Naive thymus-derived CD8-positive, alpha-beta T cell (primary cell): ENCODE measurements at regions of chr6 and their contacts with region 1.

Region 1: DNA sequence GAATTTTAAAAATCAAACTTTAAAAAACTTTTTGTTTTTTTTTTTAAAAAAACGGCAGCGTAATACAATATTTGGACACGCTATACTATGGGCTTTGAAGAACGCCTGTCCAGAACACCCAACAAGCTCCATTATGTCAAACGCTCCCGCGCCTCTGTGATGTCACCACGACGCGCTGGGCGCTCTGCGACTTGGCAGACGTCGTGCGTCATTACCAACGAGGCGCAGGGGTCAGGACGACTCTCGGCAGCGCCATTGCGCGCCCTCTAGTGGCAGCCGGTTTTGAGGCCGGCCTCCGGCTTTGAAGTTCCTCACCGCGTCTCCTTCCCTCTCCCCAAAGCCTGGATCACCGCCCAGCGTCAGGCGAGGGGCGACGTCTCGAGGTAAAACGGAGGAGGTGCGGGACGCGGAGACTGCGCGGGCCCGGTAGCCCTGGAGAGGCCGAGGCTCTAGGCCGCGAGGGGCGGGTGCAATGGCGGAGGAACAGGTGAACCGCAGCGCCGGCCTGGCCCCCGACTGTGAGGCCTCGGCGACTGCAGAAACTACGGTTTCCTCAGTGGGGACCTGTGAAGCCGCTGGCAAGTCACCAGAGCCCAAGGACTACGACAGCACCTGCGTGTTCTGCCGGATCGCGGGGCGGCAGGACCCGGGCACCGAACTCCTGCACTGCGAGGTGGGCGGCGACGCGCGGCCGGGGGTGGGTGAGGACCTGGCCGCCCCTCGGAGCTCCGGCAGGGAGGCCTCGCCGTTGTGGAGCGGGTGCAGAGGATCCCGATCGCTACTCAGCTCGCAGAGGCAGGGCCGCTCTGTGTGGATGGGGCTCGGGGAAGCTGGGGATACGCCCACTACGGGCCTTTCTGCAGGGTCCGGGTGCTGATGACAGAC is at the start of gene HINT3:
- DNase-seq: peak; percentile 95 to 98 (median 98)
- ATAC-seq: peak; percentile 87
- H3K4me3 Mint-ChIP-seq: peak within 1 kb of the TSS in 1 of 10 donors; percentile 55
- H3K27ac Mint-ChIP-seq: peak within 1 kb of the TSS in 2 of 10 donors; percentile 83 to 95
- H3K4me1 Mint-ChIP-seq: peaks cover 4 to 26% (median 10%) of the 10 kb centered on the region in 4 donors
- H3K27me3 Mint-ChIP-seq: peaks cover 4 to 10% (median 5%) of the 10 kb centered on the region in 5 donors
- polyA plus RNA-seq, gene HINT3: 7.9 to 10.4 (median 8.5) TPM

Region 2: DNA sequence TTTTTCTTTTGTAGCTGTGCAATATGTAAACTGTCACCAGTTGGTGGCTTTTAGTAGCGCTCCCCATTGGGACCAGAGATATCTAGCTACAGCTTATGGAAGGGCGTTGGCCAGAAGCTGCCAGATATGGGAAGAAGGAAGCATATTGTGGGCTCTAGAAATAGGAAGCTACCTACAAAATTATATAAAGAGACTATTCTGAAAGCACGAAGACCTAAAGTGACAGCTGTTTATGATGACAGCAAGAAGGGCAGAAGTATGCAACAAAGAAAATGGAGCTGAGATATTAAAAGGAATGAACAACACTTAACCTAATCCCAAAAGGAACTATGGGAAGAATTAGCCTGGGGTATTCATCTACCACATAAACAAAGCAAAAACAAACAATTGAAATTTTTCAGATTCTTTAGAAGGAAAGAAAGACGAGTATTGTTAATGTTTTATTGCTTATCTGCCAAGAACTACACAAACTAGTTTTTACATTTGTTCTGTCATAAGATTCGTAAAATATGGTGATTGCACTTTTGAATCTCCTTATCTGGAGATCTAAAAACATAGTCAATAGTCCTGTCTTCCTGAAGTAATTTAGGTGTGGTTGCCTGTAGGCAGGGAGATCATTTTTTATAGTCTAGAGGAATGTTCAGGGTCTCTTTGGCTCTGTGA is 84.4 kb before region 1 on chr6:
- POLR2A ChIA-PET with region 1: no interaction called
- DNase-seq: no peak
- ATAC-seq: no peak
- H3K4me3 Mint-ChIP-seq: no peak overlapping the region
- H3K27ac Mint-ChIP-seq: no peak overlapping the region
- H3K4me1 Mint-ChIP-seq: peaks cover 0 to 2% (median 1%) of the 10 kb centered on the region in 4 donors
- H3K27me3 Mint-ChIP-seq: no peaks in the 10 kb centered on the region

Region 3: GRCh38 chr6:125986300-125987025 is 29.7 kb after region 1 on chr6 and contains the start of gene TRMT11:
- POLR2A ChIA-PET with region 1: interaction called, 23 read pairs
- DNase-seq: peak; percentile 66 to 91 (median 78)
- ATAC-seq: peak; percentile 93 to 98
- H3K4me3 Mint-ChIP-seq: peak within 1 kb of the TSS in 6 of 10 donors; percentile 4 to 54 (median 36)
- H3K27ac Mint-ChIP-seq: peak within 1 kb of the TSS in 3 of 10 donors; percentile 13 to 26 (median 17)
- H3K4me1 Mint-ChIP-seq: peaks cover 2 to 18% (median 11%) of the 10 kb centered on the region in 4 donors
- H3K27me3 Mint-ChIP-seq: no peaks in the 10 kb centered on the region
- polyA plus RNA-seq, gene TRMT11: 9.4 to 16.1 (median 9.9) TPM